ENCODE measurements at regions of chr2 and their contacts with region 1.

Region 1: GRCh38 chr2:218395797-218396687 is 3.6 kb upstream of the CTDSP1 start:
- DNase-seq: peak; percentile 95
- H3K4me3 Mint-ChIP-seq: peak overlapping the region; percentile 98
- H3K27ac Mint-ChIP-seq: peak overlapping the region; percentile 90
- H3K4me1 Mint-ChIP-seq: peaks cover 12% of the 10 kb centered on the region
- H3K27me3 Mint-ChIP-seq: no peaks in the 10 kb centered on the region
- CTCF ChIP-seq: peak; percentile 86

Region 2: GRCh38 chr2:218216674-218217359 is 179.2 kb before region 1 on chr2 and contains the start of gene ARPC2:
- CTCF ChIA-PET with region 1: no interaction called
- POLR2A ChIA-PET with region 1: interaction called, 5 read pairs
- intact Hi-C with region 1: loop called (anchors 2 kb)
- DNase-seq: peak; percentile 90
- H3K4me3 Mint-ChIP-seq: peak within 1 kb of the TSS; percentile 95
- H3K27ac Mint-ChIP-seq: peak within 1 kb of the TSS; percentile 99
- H3K4me1 Mint-ChIP-seq: peaks cover 36% of the 10 kb centered on the region
- H3K27me3 Mint-ChIP-seq: no peaks in the 10 kb centered on the region
- CTCF ChIP-seq: no peak
- total RNA-seq, gene ARPC2: 196 and 284 TPM in 2 replicates

Region 3: DNA sequence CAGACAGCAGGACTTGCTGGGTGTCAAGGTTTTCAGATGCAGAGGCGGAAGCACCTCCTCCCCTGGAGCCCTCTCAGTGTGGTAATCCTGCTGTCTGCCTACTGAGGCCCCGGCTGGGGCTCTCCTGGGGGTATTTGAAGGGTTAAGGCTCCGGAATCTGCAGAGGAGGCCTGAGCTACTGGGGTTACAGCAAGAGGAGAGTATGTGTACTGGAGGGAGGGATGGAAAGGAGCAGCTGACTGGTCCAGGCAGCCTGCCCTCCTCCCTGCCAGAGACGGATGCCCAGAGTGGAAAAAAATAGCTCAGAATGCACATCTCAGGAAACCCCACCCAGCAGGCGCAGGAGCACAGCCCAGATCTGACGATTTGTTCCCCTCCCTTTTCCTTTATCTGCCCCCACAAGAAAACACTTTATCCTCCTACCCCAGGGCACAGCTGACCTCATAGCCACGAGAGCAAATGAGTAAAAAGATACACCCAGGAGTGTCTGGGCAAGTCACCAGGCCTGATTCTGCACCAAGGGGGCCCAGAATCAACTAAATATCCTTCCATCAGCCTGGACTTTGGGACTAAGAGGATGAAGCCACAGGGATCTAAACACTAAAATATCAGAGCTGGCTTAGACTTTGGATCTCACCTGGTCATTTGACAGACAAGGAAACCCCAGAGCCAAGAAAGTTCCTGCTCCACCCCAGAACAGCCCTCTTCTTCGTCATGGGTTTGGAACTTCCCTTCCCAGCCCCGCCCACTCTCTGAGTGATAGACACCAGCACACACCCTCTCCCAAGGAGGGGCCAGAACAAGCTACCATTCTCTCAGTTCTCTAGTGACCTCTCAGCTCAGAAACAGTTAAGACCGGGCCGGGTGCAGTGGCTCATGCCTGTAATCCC is 109.2 kb before region 1 on chr2:
- CTCF ChIA-PET with region 1: interaction called, 16 read pairs
- POLR2A ChIA-PET with region 1: interaction called, 108 read pairs
- intact Hi-C with region 1: loop called (anchors 2 kb)
- DNase-seq: peak; percentile 97
- H3K4me3 Mint-ChIP-seq: peak overlapping the region; percentile 80
- H3K27ac Mint-ChIP-seq: peak overlapping the region; percentile 99
- H3K4me1 Mint-ChIP-seq: peaks cover 57% of the 10 kb centered on the region
- H3K27me3 Mint-ChIP-seq: no peaks in the 10 kb centered on the region
- CTCF ChIP-seq: no peak

Region 4: DNA sequence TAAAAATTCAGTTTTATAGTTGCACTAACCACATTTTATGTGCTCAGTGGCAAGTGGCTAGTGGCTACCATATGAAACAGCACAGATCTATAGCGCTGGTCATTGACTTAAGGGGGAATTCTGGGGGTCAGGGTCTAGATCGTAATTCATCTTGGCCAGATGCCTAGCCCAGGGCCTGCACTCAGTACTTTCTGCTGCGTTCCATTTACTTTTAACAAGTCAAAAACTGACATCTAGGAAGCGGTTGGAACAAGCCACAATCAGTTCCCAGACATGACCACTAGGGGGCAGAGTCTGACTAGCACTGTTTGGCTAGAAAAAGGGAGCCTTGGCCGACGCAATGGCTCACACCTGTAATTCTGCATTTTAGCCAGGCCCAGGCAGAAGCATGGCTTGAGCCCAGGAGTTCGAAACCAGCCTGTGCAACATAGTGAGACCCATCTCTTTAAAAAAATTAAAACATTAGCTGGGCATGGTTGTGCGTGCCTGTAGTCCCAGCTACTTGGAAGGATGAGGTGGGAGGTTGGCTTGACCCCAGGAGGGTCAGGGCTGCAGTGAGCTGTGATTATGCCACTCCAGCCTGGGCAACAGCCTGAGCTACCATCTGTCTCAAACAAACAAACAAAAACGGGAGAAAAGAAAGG is 94.7 kb before region 1 on chr2:
- CTCF ChIA-PET with region 1: interaction called, 30 read pairs
- POLR2A ChIA-PET with region 1: interaction called, 17 read pairs
- intact Hi-C with region 1: loop called (anchors 1 kb)
- DNase-seq: peak; percentile 90
- H3K4me3 Mint-ChIP-seq: no peak overlapping the region
- H3K27ac Mint-ChIP-seq: no peak overlapping the region
- H3K4me1 Mint-ChIP-seq: peaks cover 16% of the 10 kb centered on the region
- H3K27me3 Mint-ChIP-seq: no peaks in the 10 kb centered on the region
- CTCF ChIP-seq: peak; percentile 91

Region 5: DNA sequence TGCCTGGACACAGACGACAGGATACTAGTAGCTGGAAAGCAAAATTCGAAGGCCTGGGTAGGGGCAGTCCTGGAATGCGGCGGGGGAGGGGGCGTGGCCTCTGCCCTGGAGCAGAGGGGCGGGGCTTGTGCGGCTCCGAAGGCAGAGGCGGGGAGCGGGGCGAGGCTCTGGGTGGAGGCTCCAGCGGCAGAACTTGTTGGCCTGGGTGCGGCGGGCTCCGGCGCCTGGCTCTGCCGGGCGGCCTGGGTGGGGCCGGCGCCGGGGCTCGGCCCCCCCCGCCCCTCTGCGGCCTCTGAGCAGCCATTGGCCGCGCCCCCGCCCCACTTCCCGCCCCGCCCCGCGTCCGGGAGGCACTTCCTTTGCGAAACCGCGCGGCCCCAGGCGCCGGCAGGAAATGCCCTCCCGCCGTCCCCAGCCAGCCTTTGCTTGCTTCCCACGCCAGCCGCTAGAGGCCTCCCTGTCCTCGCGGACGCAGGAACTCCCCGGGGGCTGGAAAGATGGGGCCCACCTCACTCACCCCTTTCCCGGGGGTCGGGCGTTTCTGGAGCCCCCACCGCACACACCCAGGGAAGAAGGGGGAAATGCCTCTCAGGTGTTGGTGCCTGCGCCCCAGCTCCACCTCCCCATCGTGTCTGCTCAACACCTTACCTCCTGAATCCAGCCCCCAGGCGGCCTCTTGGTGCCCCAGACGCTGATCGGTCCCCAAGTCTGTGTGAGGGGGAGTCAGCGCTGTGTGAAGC is 10.3 kb after region 1 on chr2:
- CTCF ChIA-PET with region 1: interaction called, 4 read pairs
- POLR2A ChIA-PET with region 1: interaction called, 28 read pairs
- intact Hi-C with region 1: no loop called
- DNase-seq: peak; percentile 94
- H3K4me3 Mint-ChIP-seq: peak overlapping the region; percentile 67
- H3K27ac Mint-ChIP-seq: peak overlapping the region; percentile 82
- H3K4me1 Mint-ChIP-seq: peaks cover 17% of the 10 kb centered on the region
- H3K27me3 Mint-ChIP-seq: no peaks in the 10 kb centered on the region
- CTCF ChIP-seq: peak; percentile 82

Measured in MCF 10A (cell line).